ENCODE measurements at regions of chr11 and their contacts with region 1.

Region 1: GRCh38 chr11:27698872-27699474 is 1.3 kb downstream of the BDNF start:
- DNase-seq: peak; percentile 74 to 95
- H3K4me3 ChIP-seq: peak overlapping the region; percentile 48 to 68 (median 60)
- H3K27ac ChIP-seq: no peak overlapping the region
- H3K4me1 ChIP-seq: peaks cover 21 to 36% (median 34%) of the 10 kb centered on the region in 4 donors
- H3K27me3 ChIP-seq: peaks cover 0 to 90% (median 41%) of the 10 kb centered on the region in 3 donors
- CTCF ChIP-seq: peak in 5 of 7 experiments; percentile 47 to 80 (median 66)
- EP300 ChIP-seq: no peak
- POLR2A ChIP-seq: no peak

Region 2: GRCh38 chr11:27874998-27875830 is 176.2 kb after region 1 on chr11:
- intact Hi-C with region 1: no loop called
- DNase-seq: peak in 1 of 2 donors; percentile 21
- H3K4me3 ChIP-seq: no peak overlapping the region
- H3K27ac ChIP-seq: no peak overlapping the region
- H3K4me1 ChIP-seq: no peaks in the 10 kb centered on the region
- H3K27me3 ChIP-seq: no peaks in the 10 kb centered on the region
- CTCF ChIP-seq: no peak
- EP300 ChIP-seq: no peak
- POLR2A ChIP-seq: no peak

Region 3: GRCh38 chr11:28529540-28530410 is 830.8 kb after region 1 on chr11:
- intact Hi-C with region 1: loop called (anchors 10 kb)
- DNase-seq: peak in 1 of 2 donors; percentile 61
- H3K4me3 ChIP-seq: no peak overlapping the region
- H3K27ac ChIP-seq: no peak overlapping the region
- H3K4me1 ChIP-seq: no peaks in the 10 kb centered on the region
- H3K27me3 ChIP-seq: no peaks in the 10 kb centered on the region
- CTCF ChIP-seq: peak in 4 of 7 experiments; percentile 15 to 27 (median 20)
- EP300 ChIP-seq: no peak
- POLR2A ChIP-seq: no peak

Region 4: DNA sequence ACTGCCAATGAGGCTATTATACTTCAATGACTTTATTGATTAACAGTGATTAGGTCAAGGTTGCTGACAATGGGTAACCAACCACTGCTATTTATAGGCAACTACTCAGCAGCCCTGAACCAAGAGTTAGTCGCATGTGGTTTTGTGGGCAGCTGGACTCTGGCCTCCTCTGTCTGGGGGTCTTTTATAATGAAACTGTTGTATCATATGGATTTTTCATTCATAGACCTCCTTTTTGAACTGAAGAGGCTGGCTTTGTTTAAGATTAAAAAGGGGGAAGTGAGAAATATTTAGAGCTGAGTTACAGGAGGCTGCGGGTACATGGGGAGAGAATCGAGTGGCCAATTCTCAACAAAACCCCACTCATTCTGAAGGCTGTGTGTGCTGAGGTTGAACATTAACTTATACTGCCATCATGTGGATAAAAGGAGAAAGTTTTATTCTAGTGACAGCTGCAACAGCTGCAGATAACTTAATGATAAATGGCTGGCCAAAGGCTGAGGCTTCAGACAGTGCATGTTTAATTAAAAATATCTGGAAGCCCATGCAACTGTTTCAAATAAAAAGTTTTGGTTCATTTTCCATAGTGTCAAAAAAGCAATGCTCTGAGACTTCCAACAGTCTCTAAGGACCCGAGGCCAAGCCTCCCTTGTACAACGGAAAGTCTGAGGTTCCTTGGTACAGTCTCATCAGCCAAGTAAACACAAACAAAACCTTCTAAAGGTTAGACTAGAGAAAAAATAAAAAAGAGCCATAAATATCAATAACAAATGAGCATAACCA is 1635.2 kb after region 1 on chr11:
- intact Hi-C with region 1: loop called (anchors 10 kb)
- DNase-seq: peak in 1 of 2 donors; percentile 68
- H3K4me3 ChIP-seq: no peak overlapping the region
- H3K27ac ChIP-seq: no peak overlapping the region
- H3K4me1 ChIP-seq: no peaks in the 10 kb centered on the region
- H3K27me3 ChIP-seq: peaks cover 0 to 7% (median 0%) of the 10 kb centered on the region in 3 donors
- CTCF ChIP-seq: peak in 2 of 7 experiments; percentile 10 to 13
- EP300 ChIP-seq: no peak
- POLR2A ChIP-seq: no peak

Measured in stomach (tissue), 19 donors.